ENCODE measurements at regions of chr6 and their contacts with region 1.

Region 1: GRCh38 chr6:50128420-50129005 is 78.8 kb upstream of the DEFB112 start:
- DNase-seq: no peak
- H3K4me3 ChIP-seq: no peak overlapping the region
- H3K27ac ChIP-seq: no peak overlapping the region
- H3K4me1 ChIP-seq: no peaks in the 10 kb centered on the region
- H3K27me3 ChIP-seq: no peaks in the 10 kb centered on the region
- CTCF ChIP-seq: peak in 2 of 3 experiments; percentile 20 to 44

Region 2: GRCh38 chr6:50602292-50602691 is 473.8 kb after region 1 on chr6:
- intact Hi-C with region 1: loop called (anchors 5 kb)
- DNase-seq: no peak
- H3K4me3 ChIP-seq: no peak overlapping the region
- H3K27ac ChIP-seq: no peak overlapping the region
- H3K4me1 ChIP-seq: no peaks in the 10 kb centered on the region
- H3K27me3 ChIP-seq: no peaks in the 10 kb centered on the region
- CTCF ChIP-seq: peak in 2 of 3 experiments; percentile 54 to 57